ENCODE measurements at regions of chr15 and their contacts with region 1.

Region 1: GRCh38 chr15:35444557-35445204 is 101.3 kb downstream of the DPH6 start:
- DNase-seq: peak in 1 of 2 experiments; percentile 7
- H3K4me3 ChIP-seq: no peak overlapping the region
- H3K27ac ChIP-seq: no peak overlapping the region
- H3K4me1 ChIP-seq: no peaks in the 10 kb centered on the region
- H3K27me3 ChIP-seq: no peaks in the 10 kb centered on the region
- CTCF ChIP-seq: peak; percentile 78

Region 2: DNA sequence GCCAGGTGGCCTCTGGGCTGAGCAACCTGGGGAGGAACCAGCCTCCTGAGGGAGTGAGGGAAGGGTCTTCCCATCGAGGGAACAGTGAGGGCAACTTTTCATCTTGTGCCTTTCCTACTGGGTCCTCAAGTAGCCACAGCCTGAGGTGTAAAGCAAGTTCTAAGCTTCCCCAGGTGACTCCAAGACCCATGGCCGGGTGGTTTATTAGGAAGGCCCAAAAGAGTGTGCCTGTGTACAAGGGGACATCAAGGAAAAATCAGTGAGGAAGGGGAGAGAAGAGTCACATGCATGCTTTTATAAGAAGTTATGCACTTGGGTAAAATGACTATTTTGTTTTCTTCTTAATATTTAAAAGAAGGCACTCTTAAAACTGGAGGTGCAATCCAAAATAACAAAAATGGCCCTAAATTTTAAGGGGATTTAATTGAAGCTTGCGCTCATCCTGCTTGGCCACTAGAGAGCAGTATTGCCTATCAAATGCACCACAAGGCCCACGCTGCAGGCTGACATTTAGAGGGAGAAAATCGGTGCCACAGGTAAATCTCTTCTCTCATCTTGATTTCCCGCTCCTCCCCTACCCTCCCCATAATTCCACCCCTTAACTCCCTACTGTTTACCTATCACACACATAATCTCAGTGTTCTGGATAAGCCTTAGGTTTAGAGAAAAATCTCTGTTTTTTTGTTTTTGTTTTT is 366.3 kb before region 1 on chr15:
- CTCF ChIA-PET with region 1: interaction called, 8 read pairs
- POLR2A ChIA-PET with region 1: no interaction called
- intact Hi-C with region 1: loop called (anchors 1 kb)
- DNase-seq: peak in 1 of 2 experiments; percentile 29
- H3K4me3 ChIP-seq: no peak overlapping the region
- H3K27ac ChIP-seq: no peak overlapping the region
- H3K4me1 ChIP-seq: no peaks in the 10 kb centered on the region
- H3K27me3 ChIP-seq: no peaks in the 10 kb centered on the region
- CTCF ChIP-seq: peak; percentile 86

Region 3: GRCh38 chr15:35289024-35289617 is 155.6 kb before region 1 on chr15:
- CTCF ChIA-PET with region 1: interaction called, 49 read pairs
- POLR2A ChIA-PET with region 1: no interaction called
- intact Hi-C with region 1: loop called (anchors 1 kb)
- DNase-seq: peak in 1 of 2 experiments; percentile 43
- H3K4me3 ChIP-seq: no peak overlapping the region
- H3K27ac ChIP-seq: no peak overlapping the region
- H3K4me1 ChIP-seq: peaks cover 17% of the 10 kb centered on the region; the same call in 1 of the 2 replicates
- H3K27me3 ChIP-seq: no peaks in the 10 kb centered on the region
- CTCF ChIP-seq: peak; percentile 75

Region 4: GRCh38 chr15:35374661-35375060 is 70.0 kb before region 1 on chr15:
- CTCF ChIA-PET with region 1: no interaction called
- POLR2A ChIA-PET with region 1: no interaction called
- intact Hi-C with region 1: loop called (anchors 5 kb)
- DNase-seq: no peak
- H3K4me3 ChIP-seq: no peak overlapping the region
- H3K27ac ChIP-seq: no peak overlapping the region
- H3K4me1 ChIP-seq: no peaks in the 10 kb centered on the region
- H3K27me3 ChIP-seq: no peaks in the 10 kb centered on the region
- CTCF ChIP-seq: no peak